Calu3 (cell line): ENCODE measurements at regions of chr11 and their contacts with region 1.

Region 1: GRCh38 chr11:107858217-107859070 is at the start of gene SLC35F2:
- DNase-seq: peak; percentile 76
- H3K4me3 Mint-ChIP-seq: peak within 1 kb of the TSS; percentile 91
- H3K27ac Mint-ChIP-seq: peak within 1 kb of the TSS; percentile 92
- H3K4me1 Mint-ChIP-seq: no peaks in the 10 kb centered on the region
- H3K27me3 Mint-ChIP-seq: no peaks in the 10 kb centered on the region
- CTCF ChIP-seq: no peak
- total RNA-seq, gene SLC35F2: 24.4 and 34.5 TPM in 2 replicates

Region 2: GRCh38 chr11:107799218-107799859 is 59.1 kb before region 1 on chr11:
- CTCF ChIA-PET with region 1: no interaction called
- intact Hi-C with region 1: loop called (anchors 5 kb)
- DNase-seq: peak; percentile 68
- H3K4me3 Mint-ChIP-seq: no peak overlapping the region
- H3K27ac Mint-ChIP-seq: no peak overlapping the region
- H3K4me1 Mint-ChIP-seq: no peaks in the 10 kb centered on the region
- H3K27me3 Mint-ChIP-seq: no peaks in the 10 kb centered on the region
- CTCF ChIP-seq: peak; percentile 68

Region 3: GRCh38 chr11:107928046-107928766 is 69.8 kb after region 1 on chr11 and contains the start of gene RAB39A:
- CTCF ChIA-PET with region 1: no interaction called
- intact Hi-C with region 1: no loop called
- DNase-seq: peak; percentile 70
- H3K4me3 Mint-ChIP-seq: no peak within 1 kb of the TSS
- H3K27ac Mint-ChIP-seq: no peak within 1 kb of the TSS
- H3K4me1 Mint-ChIP-seq: no peaks in the 10 kb centered on the region
- H3K27me3 Mint-ChIP-seq: peaks cover 42% of the 10 kb centered on the region
- CTCF ChIP-seq: no peak
- total RNA-seq, gene RAB39A: not detected in 2 replicates